ENCODE measurements at regions of chr5 and their contacts with region 1.

Region 1: DNA sequence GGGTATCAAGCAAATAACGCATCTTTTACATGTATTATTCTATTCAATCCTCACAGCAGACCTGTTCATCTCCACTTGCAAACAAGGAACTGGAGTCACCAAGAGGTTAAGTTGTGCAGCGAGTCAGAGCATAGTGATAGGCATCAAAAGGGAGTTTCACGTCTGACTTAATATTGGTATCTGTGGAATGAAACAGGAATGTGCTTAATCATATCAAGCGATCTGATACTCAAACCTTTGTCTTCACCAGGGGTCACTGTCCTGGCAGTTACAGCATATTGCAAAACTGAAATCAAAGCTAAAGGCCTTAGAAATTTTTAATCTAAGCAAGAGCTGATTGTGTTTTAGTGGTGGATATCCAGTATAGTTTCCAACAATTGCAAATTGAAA is 271.6 kb downstream of the PLK2 start:
- DNase-seq: no peak
- ATAC-seq: peak in 2 of 4 donors; percentile 18 to 24
- H3K4me3 ChIP-seq: peak overlapping the region in 1 of 12 donors; percentile 14
- H3K27ac ChIP-seq: peak overlapping the region in 3 of 12 donors; percentile 9 to 20 (median 15)
- H3K4me1 ChIP-seq: peaks cover 0 to 18% (median under 1%) of the 10 kb centered on the region in 12 donors
- H3K27me3 ChIP-seq: no peaks in the 10 kb centered on the region
- CTCF ChIP-seq: peak in 4 of 12 donors; percentile 7 to 27 (median 20)
- POLR2A ChIP-seq: no peak

Region 2: DNA sequence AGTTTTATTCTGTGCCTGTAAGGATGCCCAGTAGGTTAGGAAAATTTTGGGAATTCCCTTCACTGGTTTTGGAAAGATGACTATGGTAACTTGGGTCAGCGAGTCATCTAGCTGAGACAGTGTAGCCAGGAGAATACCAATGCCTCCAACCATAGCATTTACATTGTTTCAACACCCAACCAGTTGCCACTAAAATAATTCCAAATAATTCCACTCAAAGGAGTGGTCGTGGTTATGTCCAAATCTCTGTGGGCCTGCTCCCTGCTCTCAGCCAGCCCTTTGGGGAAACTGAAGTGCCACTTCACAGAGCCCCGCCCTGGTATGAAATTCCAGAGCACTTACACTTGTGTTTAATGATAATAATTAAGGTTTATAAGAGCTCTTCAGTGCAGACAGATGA is 38.9 kb before region 1 on chr5:
- intact Hi-C with region 1: no loop called
- DNase-seq: no peak
- ATAC-seq: no peak
- H3K4me3 ChIP-seq: no peak overlapping the region
- H3K27ac ChIP-seq: no peak overlapping the region
- H3K4me1 ChIP-seq: no peaks in the 10 kb centered on the region
- H3K27me3 ChIP-seq: no peaks in the 10 kb centered on the region
- CTCF ChIP-seq: no peak
- POLR2A ChIP-seq: no peak

Region 3: GRCh38 chr5:58240286-58240685 is 52.0 kb after region 1 on chr5:
- intact Hi-C with region 1: loop called in 2 of 10 experiments (anchors 5 kb)
- DNase-seq: no peak
- ATAC-seq: no peak
- H3K4me3 ChIP-seq: no peak overlapping the region
- H3K27ac ChIP-seq: peak overlapping the region in 8 of 12 donors; percentile 14 to 84 (median 63)
- H3K4me1 ChIP-seq: peaks cover 0 to 40% (median 7%) of the 10 kb centered on the region in 12 donors
- H3K27me3 ChIP-seq: no peaks in the 10 kb centered on the region
- CTCF ChIP-seq: no peak
- POLR2A ChIP-seq: no peak